AG04449 (cell line): ENCODE measurements at regions of chr4 and their contacts with region 1.

Region 1: GRCh38 chr4:146916479-146917076 is 29.1 kb downstream of the TTC29 start:
- DNase-seq: peak; percentile 4
- H3K4me3 ChIP-seq: no peak overlapping the region
- CTCF ChIP-seq: peak; percentile 31

Region 2: GRCh38 chr4:146342600-146343192 is 573.9 kb before region 1 on chr4:
- CTCF ChIA-PET with region 1: interaction called, 28 read pairs
- POLR2A ChIA-PET with region 1: no interaction called
- DNase-seq: no peak
- H3K4me3 ChIP-seq: no peak overlapping the region
- CTCF ChIP-seq: peak; percentile 25

Region 3: GRCh38 chr4:147003956-147004809 is 87.6 kb after region 1 on chr4:
- CTCF ChIA-PET with region 1: no interaction called
- POLR2A ChIA-PET with region 1: no interaction called
- DNase-seq: no peak
- H3K4me3 ChIP-seq: no peak overlapping the region
- CTCF ChIP-seq: no peak